Naive thymus-derived CD4-positive, alpha-beta T cell (primary cell): ENCODE measurements at regions of chr2 and their contacts with region 1.

Region 1: DNA sequence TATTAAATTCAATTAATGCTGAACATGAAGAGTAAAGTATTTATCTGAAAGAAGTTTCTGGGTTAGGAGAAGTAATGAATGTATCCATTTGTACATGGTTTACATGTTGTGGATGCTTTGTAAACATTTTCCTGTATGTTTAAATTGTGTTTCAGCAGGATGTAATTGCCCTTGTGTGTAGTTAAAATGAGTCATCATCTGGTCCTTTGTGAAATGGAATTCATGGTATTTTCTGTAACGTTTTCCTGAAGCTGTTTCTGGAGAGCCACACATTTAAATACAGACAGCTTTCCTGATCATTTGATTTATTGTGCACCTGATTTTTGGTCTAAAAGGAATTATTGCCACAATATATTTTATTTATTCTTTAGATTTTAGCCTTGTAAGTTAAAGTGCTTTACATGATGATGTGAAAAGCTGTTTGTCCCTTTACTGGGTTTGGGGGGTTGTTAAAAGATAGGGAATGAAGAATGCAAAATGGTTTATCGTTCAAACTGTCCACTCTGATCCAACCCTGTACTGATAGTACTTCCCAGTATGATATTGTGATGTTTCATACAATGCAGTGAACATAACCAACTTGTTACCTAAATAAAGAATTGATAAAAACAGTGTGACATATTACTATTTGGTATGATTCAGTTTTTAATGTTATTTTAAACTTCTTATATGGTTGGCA is 41.7 kb upstream of the SLC3A1 start:
- DNase-seq: no peak
- ATAC-seq: no peak
- H3K4me3 ChIP-seq: no peak overlapping the region
- H3K4me3 Mint-ChIP-seq: no peak overlapping the region
- H3K27ac ChIP-seq: no peak overlapping the region
- H3K27ac Mint-ChIP-seq: peak overlapping the region in 4 of 9 donors; percentile 25 to 71 (median 48)
- H3K4me1 ChIP-seq: peaks cover 16 to 17% of the 10 kb centered on the region in 2 donors
- H3K4me1 Mint-ChIP-seq: peaks cover 6 to 46% (median 36%) of the 10 kb centered on the region in 7 donors
- H3K27me3 ChIP-seq: no peaks in the 10 kb centered on the region
- H3K27me3 Mint-ChIP-seq: no peaks in the 10 kb centered on the region

Region 2: DNA sequence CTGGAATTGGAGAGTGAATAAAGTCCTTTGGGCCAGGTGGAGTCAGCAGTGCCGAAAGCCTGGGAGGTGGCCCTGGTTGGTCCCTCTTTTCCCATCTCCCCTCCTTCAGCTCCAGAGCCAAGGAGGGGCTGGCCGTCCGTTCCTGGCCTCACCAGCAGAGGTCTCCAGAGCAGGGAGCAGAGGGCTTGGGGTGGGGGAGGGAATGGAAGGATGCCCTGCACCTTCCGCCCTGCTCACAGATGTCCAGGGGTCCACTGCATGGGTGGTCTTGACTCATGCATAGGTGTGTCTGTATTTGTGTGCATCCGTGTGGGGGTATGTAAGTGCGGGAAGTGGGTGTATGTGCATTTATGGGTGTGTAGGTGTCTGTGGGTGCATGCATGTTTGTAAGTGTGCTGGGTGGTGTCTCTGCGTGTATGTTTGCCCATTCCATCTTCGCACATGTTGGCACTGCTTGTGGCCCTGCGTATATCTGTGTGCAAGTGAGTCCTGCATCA is 1209.0 kb before region 1 on chr2:
- CTCF ChIA-PET with region 1: no interaction called
- POLR2A ChIA-PET with region 1: no interaction called
- intact Hi-C with region 1: no loop called
- DNase-seq: peak in 5 of 9 donors; percentile 21 to 43 (median 25)
- ATAC-seq: peak; percentile 65
- H3K4me3 ChIP-seq: no peak overlapping the region
- H3K4me3 Mint-ChIP-seq: peak overlapping the region in 4 of 10 donors; percentile 1 to 63 (median 31)
- H3K27ac ChIP-seq: no peak overlapping the region
- H3K27ac Mint-ChIP-seq: peak overlapping the region in 7 of 9 donors; percentile 25 to 92 (median 47)
- H3K4me1 ChIP-seq: peaks cover 0 to 9% of the 10 kb centered on the region in 2 donors
- H3K4me1 Mint-ChIP-seq: peaks cover 0 to 50% (median 34%) of the 10 kb centered on the region in 7 donors
- H3K27me3 ChIP-seq: no peaks in the 10 kb centered on the region
- H3K27me3 Mint-ChIP-seq: peaks cover 0 to 9% (median 0%) of the 10 kb centered on the region in 5 donors

Region 3: DNA sequence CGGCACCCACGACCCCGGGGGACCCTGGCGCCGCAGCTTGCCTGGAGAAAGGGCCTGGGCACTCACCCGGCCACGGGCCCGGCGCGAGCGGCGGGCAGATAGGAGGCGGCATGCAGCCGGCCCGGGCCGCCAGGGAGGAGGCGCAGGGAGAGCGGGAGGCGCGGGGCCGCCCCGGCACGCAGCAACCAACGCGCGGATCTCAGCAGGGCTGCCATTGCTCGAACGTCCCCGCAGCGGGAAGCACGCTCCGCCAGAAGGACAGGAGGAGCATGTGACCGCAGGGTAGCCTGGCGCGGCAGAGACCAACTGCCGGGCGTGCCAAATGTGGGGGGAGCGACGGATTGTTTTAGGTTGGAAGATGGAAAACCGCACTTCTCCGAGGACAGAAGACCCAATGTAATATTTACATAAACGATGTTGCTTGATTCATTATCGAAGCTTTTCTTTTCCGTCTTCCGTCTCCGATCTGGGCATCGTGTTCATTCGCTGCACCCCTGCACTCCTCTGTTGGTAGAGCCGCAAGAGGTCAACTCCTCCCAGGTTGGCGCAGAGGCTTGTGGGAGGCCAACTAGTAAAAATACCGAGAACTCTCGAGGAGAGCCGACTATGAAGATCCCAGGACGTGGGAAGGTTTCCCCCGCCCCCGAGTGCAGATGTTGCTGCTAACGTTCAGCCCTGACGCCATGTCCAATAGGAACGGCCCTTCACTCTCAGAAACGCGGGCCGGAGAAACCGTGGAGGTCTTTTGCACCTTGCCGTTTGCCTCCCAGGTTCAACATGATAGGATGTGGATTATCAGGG is 237.7 kb before region 1 on chr2 and contains the start of gene LRPPRC:
- CTCF ChIA-PET with region 1: no interaction called
- POLR2A ChIA-PET with region 1: no interaction called
- intact Hi-C with region 1: loop called in 1 of 2 experiments (anchors 5 kb)
- DNase-seq: peak; percentile 69 to 95 (median 90)
- ATAC-seq: peak; percentile 98
- H3K4me3 ChIP-seq: peak within 1 kb of the TSS; percentile 98
- H3K4me3 Mint-ChIP-seq: peak within 1 kb of the TSS; percentile 89 to 99 (median 90)
- H3K27ac ChIP-seq: peak within 1 kb of the TSS; percentile 84
- H3K27ac Mint-ChIP-seq: peak within 1 kb of the TSS; percentile 95 to 100 (median 97)
- H3K4me1 ChIP-seq: peaks cover 9 to 25% of the 10 kb centered on the region in 2 donors
- H3K4me1 Mint-ChIP-seq: peaks cover 34 to 62% (median 52%) of the 10 kb centered on the region in 7 donors
- H3K27me3 ChIP-seq: no peaks in the 10 kb centered on the region
- H3K27me3 Mint-ChIP-seq: peaks cover 0 to 1% (median 0%) of the 10 kb centered on the region in 5 donors
- total RNA-seq, gene LRPPRC: 54.3 to 92.7 (median 71.2) TPM

Region 4: DNA sequence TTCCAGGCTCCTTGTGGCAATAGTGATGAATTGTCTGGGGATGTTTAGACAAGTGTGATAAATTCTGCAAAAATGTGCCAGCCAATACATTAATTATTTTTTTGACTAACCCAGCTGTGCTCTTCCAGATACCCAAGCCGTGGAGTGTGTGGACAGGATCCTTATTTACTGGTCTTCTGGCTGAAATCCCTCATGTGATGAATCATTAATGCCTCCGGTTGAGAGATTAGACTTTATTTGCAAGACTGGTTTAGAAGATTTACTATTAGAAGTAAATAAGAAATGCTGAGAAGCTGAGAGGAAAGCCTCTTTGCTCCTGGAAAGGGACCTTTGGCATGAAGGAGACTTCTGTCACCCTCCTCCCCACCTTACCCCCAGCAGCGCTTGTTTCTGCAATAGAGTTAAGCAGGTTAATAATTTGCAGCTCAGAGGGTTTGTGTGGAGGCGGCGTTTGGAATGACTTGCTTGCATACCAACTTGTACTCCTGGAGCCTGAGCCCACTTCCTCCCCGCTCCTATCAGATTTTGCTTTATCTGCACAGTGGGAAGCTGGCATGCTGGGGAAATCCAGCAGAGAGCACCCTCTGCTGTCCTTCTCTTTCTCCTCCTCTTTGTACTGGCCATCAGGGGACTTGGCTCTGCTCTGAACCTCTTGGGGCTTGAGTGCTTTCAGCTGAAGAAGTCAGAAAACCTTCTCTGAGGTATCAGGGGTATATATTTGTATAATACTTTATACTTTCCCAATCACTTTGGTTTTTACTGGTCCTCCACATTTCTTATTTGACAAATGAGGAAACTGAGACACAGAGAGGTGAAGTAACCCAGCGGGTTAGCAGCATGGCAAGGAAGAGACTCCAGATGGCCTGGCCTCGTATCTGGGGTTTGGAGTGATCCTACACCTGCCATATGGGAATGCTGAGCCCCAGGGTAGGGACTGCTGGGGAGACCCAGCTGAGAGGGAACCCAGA is 58.0 kb after region 1 on chr2:
- CTCF ChIA-PET with region 1: no interaction called
- POLR2A ChIA-PET with region 1: no interaction called
- intact Hi-C with region 1: loop called in 1 of 2 experiments (anchors 5 kb)
- DNase-seq: no peak
- ATAC-seq: no peak
- H3K4me3 ChIP-seq: no peak overlapping the region
- H3K4me3 Mint-ChIP-seq: no peak overlapping the region
- H3K27ac ChIP-seq: no peak overlapping the region
- H3K27ac Mint-ChIP-seq: peak overlapping the region in 1 of 9 donors; percentile 33
- H3K4me1 ChIP-seq: peaks cover 0 to 1% of the 10 kb centered on the region in 2 donors
- H3K4me1 Mint-ChIP-seq: peaks cover 2 to 11% (median 10%) of the 10 kb centered on the region in 7 donors
- H3K27me3 ChIP-seq: no peaks in the 10 kb centered on the region
- H3K27me3 Mint-ChIP-seq: peaks cover 0 to 14% (median 5%) of the 10 kb centered on the region in 5 donors